ENCODE measurements at regions of chr5 and their contacts with region 1.

Region 1: GRCh38 chr5:122192497-122193496 is 63.5 kb downstream of the ZNF474 start:
- DNase-seq: peak in 3 of 5 donors; percentile 48 to 94 (median 88)
- H3K4me3 ChIP-seq: no peak overlapping the region
- H3K27ac ChIP-seq: no peak overlapping the region
- H3K4me1 ChIP-seq: no peaks in the 10 kb centered on the region
- H3K27me3 ChIP-seq: no peaks in the 10 kb centered on the region
- CTCF ChIP-seq: peak; percentile 71

Region 2: DNA sequence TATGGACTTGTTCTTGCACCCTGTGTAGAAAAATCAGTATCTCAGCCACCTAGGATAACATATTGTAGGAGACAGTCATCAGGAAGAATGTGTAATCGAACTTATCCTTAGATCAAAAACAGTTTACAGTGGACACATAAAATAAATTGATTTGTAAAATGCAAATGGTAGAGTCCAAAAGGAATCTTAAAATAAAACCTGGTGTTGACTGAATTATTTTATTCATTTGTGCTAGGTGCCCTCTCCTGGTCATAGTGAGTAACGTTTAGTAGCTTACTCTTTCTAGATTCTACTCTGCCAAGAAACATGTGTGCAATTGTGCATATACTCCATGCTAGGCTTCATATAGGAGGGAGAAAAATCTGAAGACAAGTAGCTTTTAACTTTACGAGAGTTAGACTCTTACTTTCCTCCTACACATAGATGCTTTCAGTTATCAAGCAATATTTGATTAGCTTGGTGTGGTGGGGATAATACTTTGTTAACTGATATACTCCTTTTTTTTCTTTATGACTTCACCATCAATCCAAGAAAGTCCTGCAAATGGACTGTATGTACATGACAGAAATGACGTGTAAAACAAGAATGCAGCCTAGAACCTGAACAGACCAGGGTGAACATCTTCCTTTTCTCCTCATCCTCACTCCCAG is 91.0 kb before region 1 on chr5:
- intact Hi-C with region 1: no loop called
- DNase-seq: peak in 2 of 5 donors; percentile 55 to 79
- H3K4me3 ChIP-seq: no peak overlapping the region
- H3K27ac ChIP-seq: no peak overlapping the region
- H3K4me1 ChIP-seq: no peaks in the 10 kb centered on the region
- H3K27me3 ChIP-seq: no peaks in the 10 kb centered on the region
- CTCF ChIP-seq: peak; percentile 36

Region 3: GRCh38 chr5:122413722-122414121 is 220.9 kb after region 1 on chr5:
- intact Hi-C with region 1: loop called (anchors 5 kb)
- DNase-seq: no peak
- H3K4me3 ChIP-seq: no peak overlapping the region
- H3K27ac ChIP-seq: no peak overlapping the region
- H3K4me1 ChIP-seq: no peaks in the 10 kb centered on the region
- H3K27me3 ChIP-seq: no peaks in the 10 kb centered on the region
- CTCF ChIP-seq: no peak

Region 4: GRCh38 chr5:122492664-122493063 is 299.9 kb after region 1 on chr5:
- intact Hi-C with region 1: loop called (anchors 10 kb)
- DNase-seq: no peak
- H3K4me3 ChIP-seq: no peak overlapping the region
- H3K27ac ChIP-seq: no peak overlapping the region
- H3K4me1 ChIP-seq: no peaks in the 10 kb centered on the region
- H3K27me3 ChIP-seq: no peaks in the 10 kb centered on the region
- CTCF ChIP-seq: no peak